Naive thymus-derived CD4-positive, alpha-beta T cell (primary cell): ENCODE measurements at regions of chr5 and their contacts with region 1.

Region 1: DNA sequence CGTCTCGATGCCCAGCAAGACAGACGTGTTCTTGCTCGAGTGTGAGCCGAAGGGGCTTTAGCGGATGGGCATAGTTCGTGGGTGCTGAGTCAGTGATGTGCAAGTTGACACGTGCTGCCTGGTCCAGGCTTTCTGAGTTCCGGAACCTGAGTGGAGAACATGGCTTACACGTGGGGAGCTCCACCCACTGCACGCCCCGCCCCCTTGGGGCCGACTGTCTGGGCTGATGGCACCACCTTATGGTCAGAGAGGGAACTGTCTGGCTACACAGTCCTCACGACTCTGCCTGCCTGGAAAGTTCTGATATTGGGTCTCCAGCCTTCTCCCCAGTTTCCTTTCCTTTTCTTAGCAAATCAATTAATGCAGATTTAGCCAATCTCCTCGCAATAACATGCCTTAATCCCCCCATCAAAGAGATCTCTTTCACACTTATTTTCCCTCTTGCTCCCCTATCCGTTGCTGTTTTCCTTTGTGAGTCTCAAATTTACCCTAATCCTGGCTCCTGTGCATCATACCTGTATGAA is 3.8 kb upstream of the STC2 start:
- DNase-seq: peak; percentile 29 to 92 (median 59)
- ATAC-seq: peak; percentile 96
- H3K4me3 ChIP-seq: no peak overlapping the region
- H3K4me3 Mint-ChIP-seq: peak overlapping the region in 2 of 10 donors; percentile 10 to 48
- H3K27ac ChIP-seq: no peak overlapping the region
- H3K27ac Mint-ChIP-seq: peak overlapping the region in 1 of 9 donors; percentile 62
- H3K4me1 ChIP-seq: no peaks in the 10 kb centered on the region
- H3K4me1 Mint-ChIP-seq: peaks cover 10 to 33% (median 17%) of the 10 kb centered on the region in 7 donors
- H3K27me3 ChIP-seq: peaks cover 0 to 3% of the 10 kb centered on the region in 2 donors
- H3K27me3 Mint-ChIP-seq: peaks cover 7 to 71% (median 68%) of the 10 kb centered on the region in 5 donors

Region 2: GRCh38 chr5:171387345-171387969 is 1944.6 kb before region 1 on chr5 and contains the start of gene NPM1:
- CTCF ChIA-PET with region 1: no interaction called
- POLR2A ChIA-PET with region 1: no interaction called
- intact Hi-C with region 1: loop called in 1 of 2 experiments (anchors 10 kb)
- DNase-seq: peak; percentile 90 to 99 (median 98)
- ATAC-seq: peak; percentile 93
- H3K4me3 ChIP-seq: peak within 1 kb of the TSS; percentile 91
- H3K4me3 Mint-ChIP-seq: peak within 1 kb of the TSS; percentile 92 to 99 (median 98)
- H3K27ac ChIP-seq: peak within 1 kb of the TSS; percentile 88
- H3K27ac Mint-ChIP-seq: peak within 1 kb of the TSS; percentile 96 to 100 (median 98)
- H3K4me1 ChIP-seq: peaks cover 31 to 40% of the 10 kb centered on the region in 2 donors
- H3K4me1 Mint-ChIP-seq: peaks cover 25 to 52% (median 49%) of the 10 kb centered on the region in 7 donors
- H3K27me3 ChIP-seq: no peaks in the 10 kb centered on the region
- H3K27me3 Mint-ChIP-seq: peaks cover 0 to 6% (median 0%) of the 10 kb centered on the region in 5 donors
- total RNA-seq, gene NPM1: 807 to 1,238 (median 1,192) TPM

Region 3: DNA sequence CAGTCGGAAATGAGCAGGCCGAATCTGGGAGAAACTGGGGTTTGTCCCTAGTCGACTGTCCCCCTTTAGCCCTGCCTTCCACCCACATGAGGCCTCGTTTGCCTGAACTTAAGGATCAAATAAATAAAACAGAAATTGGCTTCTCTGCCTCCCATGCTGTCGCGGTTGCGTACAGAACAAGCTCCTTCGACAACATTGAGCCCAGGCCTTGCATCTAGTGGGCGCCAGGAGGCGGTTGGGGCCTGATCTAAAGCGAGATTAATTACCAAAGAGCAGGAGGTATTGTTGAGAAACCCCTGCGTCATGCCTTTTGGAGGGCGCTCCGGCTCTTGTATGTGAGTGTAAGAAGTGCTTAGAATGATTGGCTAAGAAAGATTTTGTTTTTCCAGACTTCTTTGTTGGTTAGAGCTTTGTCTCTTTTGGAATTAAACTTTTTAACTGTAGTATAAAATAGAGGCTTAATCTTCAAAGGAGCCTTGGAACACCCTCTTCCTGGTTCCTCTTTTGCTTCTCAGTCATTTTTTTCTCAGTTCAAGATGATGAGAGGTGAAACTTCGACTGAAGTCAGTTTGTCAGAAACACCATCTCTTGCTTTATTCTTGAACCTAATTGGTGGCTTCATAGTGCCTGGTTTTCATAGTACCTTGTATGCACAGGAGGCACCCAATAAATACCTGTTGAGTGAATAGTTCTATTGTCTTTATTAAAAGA is 347.6 kb before region 1 on chr5:
- CTCF ChIA-PET with region 1: no interaction called
- POLR2A ChIA-PET with region 1: no interaction called
- intact Hi-C with region 1: loop called in 1 of 2 experiments (anchors 1 kb)
- DNase-seq: peak; percentile 47 to 90 (median 82)
- ATAC-seq: peak; percentile 86
- H3K4me3 ChIP-seq: peak overlapping the region; percentile 64
- H3K4me3 Mint-ChIP-seq: peak overlapping the region; percentile 88 to 99 (median 97)
- H3K27ac ChIP-seq: peak overlapping the region; percentile 92
- H3K27ac Mint-ChIP-seq: peak overlapping the region; percentile 92 to 99 (median 98)
- H3K4me1 ChIP-seq: peaks cover 16 to 26% of the 10 kb centered on the region in 2 donors
- H3K4me1 Mint-ChIP-seq: peaks cover 20 to 71% (median 48%) of the 10 kb centered on the region in 7 donors
- H3K27me3 ChIP-seq: no peaks in the 10 kb centered on the region
- H3K27me3 Mint-ChIP-seq: no peaks in the 10 kb centered on the region

Region 4: DNA sequence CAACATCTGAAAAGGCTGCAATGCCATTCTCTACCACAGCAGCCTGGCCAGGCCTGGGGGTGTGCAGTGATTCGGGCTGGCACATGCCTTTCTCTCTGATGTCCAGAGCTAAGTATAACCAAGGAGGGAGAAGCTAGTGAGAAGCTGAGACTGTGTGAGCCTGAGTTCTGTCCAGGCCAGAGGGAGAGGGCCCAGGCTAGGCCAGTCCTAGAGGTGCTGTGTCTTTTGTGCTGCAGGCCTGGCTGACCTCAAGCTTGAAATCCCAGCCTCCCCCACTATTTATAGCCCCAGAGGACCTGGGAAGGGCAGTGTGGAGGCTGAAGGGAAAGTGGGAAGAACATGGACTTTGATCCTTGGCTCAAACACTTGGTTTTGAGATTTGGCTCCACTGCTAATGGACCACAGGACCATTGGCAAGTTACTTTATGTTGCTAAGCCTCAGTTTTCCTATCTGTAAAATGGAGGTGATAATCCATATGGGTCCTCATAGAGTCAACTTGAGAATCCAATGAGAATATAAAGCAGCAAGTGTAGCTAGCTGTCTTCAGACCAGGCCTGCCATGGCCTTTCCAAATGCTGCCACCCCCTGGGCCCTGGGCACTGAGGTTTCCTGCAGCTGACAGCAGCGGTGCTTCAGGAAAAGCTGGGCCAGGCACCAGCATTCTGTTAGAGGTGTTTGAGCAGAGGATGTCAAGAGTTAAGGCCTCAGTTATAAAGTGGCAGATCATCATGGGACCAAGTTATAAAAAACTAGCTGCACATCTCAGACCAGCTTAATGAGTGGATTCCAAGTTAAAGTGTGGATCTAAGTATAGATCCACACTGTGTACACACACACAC is 166.6 kb before region 1 on chr5:
- CTCF ChIA-PET with region 1: no interaction called
- POLR2A ChIA-PET with region 1: no interaction called
- intact Hi-C with region 1: loop called in 1 of 2 experiments (anchors 1 kb)
- DNase-seq: no peak
- ATAC-seq: no peak
- H3K4me3 ChIP-seq: no peak overlapping the region
- H3K4me3 Mint-ChIP-seq: no peak overlapping the region
- H3K27ac ChIP-seq: no peak overlapping the region
- H3K27ac Mint-ChIP-seq: no peak overlapping the region
- H3K4me1 ChIP-seq: no peaks in the 10 kb centered on the region
- H3K4me1 Mint-ChIP-seq: peaks cover 0 to 1% (median 0%) of the 10 kb centered on the region in 7 donors
- H3K27me3 ChIP-seq: no peaks in the 10 kb centered on the region
- H3K27me3 Mint-ChIP-seq: no peaks in the 10 kb centered on the region

Region 5: DNA sequence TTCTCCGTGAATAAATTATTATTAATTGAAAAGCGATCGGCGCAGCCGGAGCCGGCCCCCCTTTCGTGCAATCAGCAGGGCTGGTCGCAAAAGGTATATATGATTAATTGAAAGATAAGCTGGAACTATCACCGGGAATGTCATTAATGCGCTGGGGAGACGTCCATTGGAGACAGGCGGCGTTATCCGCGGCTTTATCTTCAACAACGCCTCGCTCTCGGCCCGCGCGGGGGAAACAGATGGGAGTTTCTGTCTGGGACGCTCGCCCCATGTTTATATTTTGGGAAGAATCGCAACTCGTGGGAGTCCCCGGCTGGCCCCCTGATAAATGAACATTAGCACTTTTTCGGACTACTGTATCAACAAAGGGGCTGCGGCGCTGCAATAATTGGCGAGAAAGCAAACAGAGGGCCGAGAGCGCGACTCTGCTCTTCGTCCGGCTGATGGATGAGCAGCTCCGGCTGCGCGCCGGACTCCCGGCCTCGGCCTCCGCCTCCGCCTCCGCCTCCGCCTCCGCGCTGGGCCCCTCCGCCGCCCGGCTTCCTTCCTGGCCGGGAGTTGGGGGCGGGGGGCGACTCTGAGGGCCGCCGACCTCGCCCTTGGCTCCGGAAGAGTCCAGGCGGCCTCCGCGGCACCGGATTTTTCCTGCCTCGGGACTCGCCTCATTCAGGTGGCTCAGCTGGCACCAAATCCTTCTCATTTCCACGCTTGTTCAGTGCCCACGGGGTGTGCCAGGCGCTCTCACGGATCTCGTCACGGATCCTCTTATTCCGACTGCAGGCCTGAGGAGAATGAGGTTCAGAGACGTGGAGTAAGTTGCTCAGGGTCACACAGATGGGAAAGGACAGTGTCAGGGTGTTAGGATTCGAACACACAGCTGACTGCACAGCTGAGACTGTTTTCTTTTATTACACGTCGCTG is 93.4 kb before region 1 on chr5:
- CTCF ChIA-PET with region 1: no interaction called
- POLR2A ChIA-PET with region 1: no interaction called
- intact Hi-C with region 1: loop called in 1 of 2 experiments (anchors 5 kb)
- DNase-seq: peak in 1 of 9 donors; percentile 23
- ATAC-seq: no peak
- H3K4me3 ChIP-seq: peak overlapping the region; percentile 20
- H3K4me3 Mint-ChIP-seq: peak overlapping the region; percentile 51 to 81 (median 72)
- H3K27ac ChIP-seq: no peak overlapping the region
- H3K27ac Mint-ChIP-seq: peak overlapping the region in 1 of 9 donors; percentile 82
- H3K4me1 ChIP-seq: peaks cover 0 to 18% of the 10 kb centered on the region in 2 donors
- H3K4me1 Mint-ChIP-seq: peaks cover 22 to 56% (median 47%) of the 10 kb centered on the region in 7 donors
- H3K27me3 ChIP-seq: peaks cover 4 to 32% of the 10 kb centered on the region in 2 donors
- H3K27me3 Mint-ChIP-seq: peaks cover 88 to 96% (median 92%) of the 10 kb centered on the region in 5 donors

Region 6: DNA sequence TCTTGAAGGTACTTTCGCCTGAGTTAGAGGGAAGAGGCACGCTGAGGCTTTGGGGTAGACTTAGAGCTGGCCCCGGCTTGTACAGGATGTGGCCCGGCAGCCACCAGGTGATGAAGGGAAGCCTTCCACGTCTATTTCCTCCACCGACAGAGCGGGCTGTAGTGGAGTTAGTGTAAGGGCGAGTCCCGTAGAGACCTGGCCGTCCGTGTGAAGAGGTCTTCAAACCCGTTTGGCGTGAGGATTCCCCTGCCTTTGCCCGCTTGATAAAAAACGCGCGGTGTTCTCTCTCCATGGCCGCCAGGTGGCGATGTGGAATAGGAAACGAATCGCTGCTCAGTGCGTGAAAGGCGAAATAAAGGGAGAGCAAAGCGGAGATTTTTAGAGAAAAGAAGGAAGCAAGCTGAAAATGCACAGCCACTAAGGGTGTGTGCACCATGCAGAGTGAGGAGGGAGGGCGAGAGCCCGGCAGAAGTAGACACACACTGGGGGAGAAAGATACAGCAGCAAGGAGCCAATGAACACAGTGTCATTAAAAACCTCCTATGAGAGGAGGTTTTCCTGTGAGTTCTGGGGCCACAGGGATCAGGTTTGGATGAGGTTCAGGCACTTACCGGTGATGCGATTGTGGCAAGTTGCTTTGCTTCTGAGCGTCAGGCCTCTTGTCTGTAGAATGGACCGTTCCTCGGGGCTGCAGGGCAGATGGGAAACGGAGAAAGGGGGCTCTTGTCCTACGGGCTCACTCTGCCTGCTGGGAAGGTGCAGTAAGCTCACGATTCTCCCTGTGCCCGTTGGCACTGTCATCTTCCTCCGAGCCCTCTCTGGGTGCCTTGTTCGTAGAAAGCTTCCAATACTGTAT is 38.0 kb before region 1 on chr5:
- CTCF ChIA-PET with region 1: interaction called, 3 read pairs
- POLR2A ChIA-PET with region 1: no interaction called
- intact Hi-C with region 1: loop called (anchors 1 kb)
- DNase-seq: peak; percentile 34 to 75 (median 58)
- ATAC-seq: peak; percentile 78
- H3K4me3 ChIP-seq: peak overlapping the region; percentile 34
- H3K4me3 Mint-ChIP-seq: peak overlapping the region; percentile 24 to 88 (median 75)
- H3K27ac ChIP-seq: no peak overlapping the region
- H3K27ac Mint-ChIP-seq: no peak overlapping the region
- H3K4me1 ChIP-seq: peaks cover 4 to 11% of the 10 kb centered on the region in 2 donors
- H3K4me1 Mint-ChIP-seq: peaks cover 11 to 18% (median 13%) of the 10 kb centered on the region in 7 donors
- H3K27me3 ChIP-seq: no peaks in the 10 kb centered on the region
- H3K27me3 Mint-ChIP-seq: peaks cover 45 to 63% (median 52%) of the 10 kb centered on the region in 5 donors

Region 7: GRCh38 chr5:173315495-173316350 is 16.3 kb before region 1 on chr5:
- CTCF ChIA-PET with region 1: no interaction called
- POLR2A ChIA-PET with region 1: no interaction called
- intact Hi-C with region 1: no loop called
- DNase-seq: no peak
- ATAC-seq: no peak
- H3K4me3 ChIP-seq: no peak overlapping the region
- H3K4me3 Mint-ChIP-seq: no peak overlapping the region
- H3K27ac ChIP-seq: no peak overlapping the region
- H3K27ac Mint-ChIP-seq: no peak overlapping the region
- H3K4me1 ChIP-seq: no peaks in the 10 kb centered on the region
- H3K4me1 Mint-ChIP-seq: peaks cover 0 to 8% (median 0%) of the 10 kb centered on the region in 7 donors
- H3K27me3 ChIP-seq: no peaks in the 10 kb centered on the region
- H3K27me3 Mint-ChIP-seq: peaks cover 3 to 83% (median 59%) of the 10 kb centered on the region in 5 donors